Panc1 (cell line): ENCODE measurements at regions of chr15 and their contacts with region 1.

Region 1: GRCh38 chr15:44215594-44215993 is 20.5 kb upstream of the FRMD5 start:
- DNase-seq: peak; percentile 64
- ATAC-seq: peak; percentile 93
- H3K4me3 ChIP-seq: no peak overlapping the region
- H3K27ac ChIP-seq: no peak overlapping the region
- H3K4me1 ChIP-seq: peaks cover 5% of the 10 kb centered on the region; the same call in 1 of the 2 replicates
- H3K27me3 ChIP-seq: no peaks in the 10 kb centered on the region
- CTCF ChIP-seq: no peak

Region 2: DNA sequence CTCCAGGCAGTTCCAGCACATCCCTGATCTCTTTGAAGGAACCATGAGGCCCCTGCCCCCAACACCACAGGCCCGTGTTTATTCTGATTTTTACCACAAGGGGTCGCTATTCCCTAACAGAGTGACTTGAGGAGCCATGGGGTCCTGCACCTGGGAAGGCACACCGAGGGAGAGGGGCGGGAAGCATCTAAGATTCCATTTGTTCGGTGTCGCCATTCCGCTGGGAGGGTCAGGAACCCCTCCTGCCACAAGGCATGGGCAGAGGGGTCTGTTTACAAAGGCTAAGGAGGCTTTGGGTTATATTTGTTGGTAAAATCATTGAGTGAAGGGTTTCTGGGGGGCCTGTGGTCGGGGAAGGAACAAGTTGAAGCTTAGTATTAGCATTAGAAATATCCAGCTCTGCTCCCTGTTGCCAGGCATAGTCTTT is 311.7 kb before region 1 on chr15:
- CTCF ChIA-PET with region 1: no interaction called
- POLR2A ChIA-PET with region 1: no interaction called
- in situ Hi-C with region 1: no loop called
- intact Hi-C with region 1: loop called (anchors 2 kb)
- DNase-seq: peak; percentile 47
- ATAC-seq: peak; percentile 87
- H3K4me3 ChIP-seq: no peak overlapping the region
- H3K27ac ChIP-seq: no peak overlapping the region
- H3K4me1 ChIP-seq: no peaks in the 10 kb centered on the region
- H3K27me3 ChIP-seq: no peaks in the 10 kb centered on the region
- CTCF ChIP-seq: peak; percentile 93

Region 3: GRCh38 chr15:44066316-44066740 is 149.3 kb before region 1 on chr15:
- CTCF ChIA-PET with region 1: no interaction called
- POLR2A ChIA-PET with region 1: no interaction called
- in situ Hi-C with region 1: no loop called
- intact Hi-C with region 1: loop called (anchors 5 kb)
- DNase-seq: peak; percentile 58
- ATAC-seq: peak; percentile 85
- H3K4me3 ChIP-seq: peak overlapping the region in 1 of 2 experiments; percentile 30; a peak in 2 of 4 replicates
- H3K27ac ChIP-seq: peak overlapping the region; percentile 74
- H3K4me1 ChIP-seq: peaks cover 7% of the 10 kb centered on the region
- H3K27me3 ChIP-seq: no peaks in the 10 kb centered on the region
- CTCF ChIP-seq: peak; percentile 86

Region 4: GRCh38 chr15:44163370-44163769 is 52.2 kb before region 1 on chr15:
- CTCF ChIA-PET with region 1: no interaction called
- POLR2A ChIA-PET with region 1: interaction called, 16 read pairs
- in situ Hi-C with region 1: no loop called
- intact Hi-C with region 1: no loop called
- DNase-seq: no peak
- ATAC-seq: no peak
- H3K4me3 ChIP-seq: no peak overlapping the region
- H3K27ac ChIP-seq: no peak overlapping the region; the same call in 1 of the 2 replicates
- H3K4me1 ChIP-seq: peaks cover 12% of the 10 kb centered on the region
- H3K27me3 ChIP-seq: no peaks in the 10 kb centered on the region
- CTCF ChIP-seq: no peak

Region 5: DNA sequence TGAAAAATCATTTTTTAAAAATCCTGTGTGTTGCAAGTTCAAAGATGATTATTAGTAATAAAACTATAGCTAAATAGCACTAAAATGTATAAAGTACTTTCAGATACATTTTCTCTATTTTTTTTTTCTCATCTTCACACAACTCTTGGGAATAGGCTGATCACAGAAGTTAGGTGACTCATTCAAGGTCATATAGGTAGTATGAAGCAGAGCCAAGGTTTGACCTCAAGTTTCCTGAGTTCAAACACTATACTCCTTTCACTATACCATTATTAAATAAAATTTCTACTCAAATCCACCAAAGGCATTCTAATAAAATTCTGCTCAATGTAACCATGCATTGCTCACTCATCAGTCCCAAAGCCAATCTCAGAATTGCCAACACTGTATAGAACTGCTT is 41.8 kb before region 1 on chr15:
- CTCF ChIA-PET with region 1: no interaction called
- POLR2A ChIA-PET with region 1: no interaction called
- in situ Hi-C with region 1: no loop called
- intact Hi-C with region 1: no loop called
- DNase-seq: no peak
- ATAC-seq: no peak
- H3K4me3 ChIP-seq: no peak overlapping the region
- H3K27ac ChIP-seq: no peak overlapping the region
- H3K4me1 ChIP-seq: no peaks in the 10 kb centered on the region
- H3K27me3 ChIP-seq: no peaks in the 10 kb centered on the region
- CTCF ChIP-seq: no peak

Region 6: GRCh38 chr15:44243829-44244228 is 28.2 kb after region 1 on chr15:
- CTCF ChIA-PET with region 1: interaction called, 12 read pairs
- POLR2A ChIA-PET with region 1: no interaction called
- in situ Hi-C with region 1: no loop called
- intact Hi-C with region 1: no loop called
- DNase-seq: no peak
- ATAC-seq: peak; percentile 77
- H3K4me3 ChIP-seq: no peak overlapping the region
- H3K27ac ChIP-seq: no peak overlapping the region
- H3K4me1 ChIP-seq: peaks cover 4% of the 10 kb centered on the region; the same call in 1 of the 2 replicates
- H3K27me3 ChIP-seq: no peaks in the 10 kb centered on the region
- CTCF ChIP-seq: peak; percentile 77

Region 7: DNA sequence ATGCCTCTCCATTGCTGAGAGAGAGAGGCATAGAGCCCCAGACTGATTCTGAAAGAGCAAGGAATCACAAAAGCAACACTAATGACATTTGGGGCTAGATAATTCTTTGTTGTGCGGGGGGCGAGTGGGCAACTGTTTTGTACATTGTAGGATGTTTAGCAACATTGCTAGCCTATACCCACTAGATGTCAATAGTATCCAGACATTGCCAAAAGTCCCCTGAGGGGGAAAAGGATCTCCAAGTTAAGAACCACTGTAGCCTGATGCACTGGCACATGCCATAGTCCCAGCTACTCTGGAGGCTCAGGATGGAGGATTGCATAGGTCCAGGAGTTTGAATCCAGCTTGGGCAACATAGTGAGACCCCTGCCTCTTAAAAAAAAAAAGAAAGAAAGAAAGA is 50.2 kb after region 1 on chr15:
- CTCF ChIA-PET with region 1: interaction called, 12 read pairs
- POLR2A ChIA-PET with region 1: no interaction called
- in situ Hi-C with region 1: no loop called
- intact Hi-C with region 1: no loop called
- DNase-seq: no peak
- ATAC-seq: no peak
- H3K4me3 ChIP-seq: no peak overlapping the region
- H3K27ac ChIP-seq: no peak overlapping the region
- H3K4me1 ChIP-seq: no peaks in the 10 kb centered on the region
- H3K27me3 ChIP-seq: no peaks in the 10 kb centered on the region; the same call in 1 of the 2 replicates
- CTCF ChIP-seq: no peak

Region 8: GRCh38 chr15:44414001-44414400 is 198.4 kb after region 1 on chr15:
- CTCF ChIA-PET with region 1: interaction called, 10 read pairs
- POLR2A ChIA-PET with region 1: no interaction called
- in situ Hi-C with region 1: no loop called
- intact Hi-C with region 1: no loop called
- DNase-seq: no peak
- ATAC-seq: no peak
- H3K4me3 ChIP-seq: no peak overlapping the region
- H3K27ac ChIP-seq: no peak overlapping the region
- H3K4me1 ChIP-seq: no peaks in the 10 kb centered on the region
- H3K27me3 ChIP-seq: no peaks in the 10 kb centered on the region
- CTCF ChIP-seq: no peak

Region 9: DNA sequence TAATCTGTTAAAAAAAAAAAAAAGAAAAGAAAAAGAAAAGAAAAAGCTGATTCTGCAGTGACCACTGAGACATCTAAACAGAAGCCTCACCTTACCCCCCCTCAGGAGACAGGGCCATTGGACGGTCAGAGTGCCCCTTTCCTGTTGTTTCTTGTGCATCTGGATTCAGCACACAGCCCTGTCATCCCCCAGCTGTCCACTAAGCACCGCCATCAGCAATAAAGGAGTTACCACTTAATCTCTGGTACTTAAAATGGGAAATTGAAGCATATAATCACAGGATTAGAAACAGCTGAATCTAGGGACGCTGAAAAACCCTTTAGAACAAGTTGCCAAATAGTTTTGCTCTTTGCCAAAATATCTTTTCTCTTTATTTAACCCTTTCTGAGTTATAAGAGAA is 583.2 kb after region 1 on chr15:
- CTCF ChIA-PET with region 1: no interaction called
- POLR2A ChIA-PET with region 1: no interaction called
- in situ Hi-C with region 1: no loop called
- intact Hi-C with region 1: no loop called
- DNase-seq: no peak
- ATAC-seq: no peak
- H3K4me3 ChIP-seq: no peak overlapping the region
- H3K27ac ChIP-seq: no peak overlapping the region
- H3K4me1 ChIP-seq: no peaks in the 10 kb centered on the region
- H3K27me3 ChIP-seq: peaks cover 4% of the 10 kb centered on the region
- CTCF ChIP-seq: peak; percentile 47